Gastrocnemius medialis (tissue), 4 donors: ENCODE measurements at regions of chr17 and their contacts with region 1.

Region 1: GRCh38 chr17:8383143-8383822 is at the start of gene RPL26:
- DNase-seq: peak; percentile 96 to 98
- ATAC-seq: peak; percentile 93 to 96
- H3K4me3 ChIP-seq: peak within 1 kb of the TSS; percentile 67 to 88 (median 87)
- H3K27ac ChIP-seq: peak within 1 kb of the TSS; percentile 84 to 94 (median 92)
- H3K4me1 ChIP-seq: peaks cover 25% of the 10 kb centered on the region in 2 donors
- H3K27me3 ChIP-seq: no peaks in the 10 kb centered on the region
- CTCF ChIP-seq: peak; percentile 96 to 100 (median 100)
- POLR2A ChIP-seq: peak; percentile 84
- total RNA-seq, gene RPL26: 2,392 to 2,913 (median 2,833) TPM

Region 2: GRCh38 chr17:7932949-7933348 is 450.3 kb before region 1 on chr17:
- in situ Hi-C with region 1: no loop called
- intact Hi-C with region 1: no loop called
- DNase-seq: peak in 1 of 2 donors; percentile 31
- ATAC-seq: no peak
- H3K4me3 ChIP-seq: peak overlapping the region; percentile 85 to 97 (median 94)
- H3K27ac ChIP-seq: peak overlapping the region in 3 of 4 donors; percentile 83 to 87 (median 87)
- H3K4me1 ChIP-seq: peaks cover 17 to 19% of the 10 kb centered on the region in 2 donors
- H3K27me3 ChIP-seq: no peaks in the 10 kb centered on the region
- CTCF ChIP-seq: no peak
- POLR2A ChIP-seq: no peak

Region 3: GRCh38 chr17:8222630-8223356 is 160.5 kb before region 1 on chr17:
- in situ Hi-C with region 1: no loop called
- intact Hi-C with region 1: no loop called
- DNase-seq: peak; percentile 88 to 95
- ATAC-seq: peak; percentile 51 to 55
- H3K4me3 ChIP-seq: peak overlapping the region; percentile 64 to 91 (median 67)
- H3K27ac ChIP-seq: peak overlapping the region; percentile 89 to 99 (median 94)
- H3K4me1 ChIP-seq: peaks cover 11 to 13% of the 10 kb centered on the region in 2 donors
- H3K27me3 ChIP-seq: no peaks in the 10 kb centered on the region
- CTCF ChIP-seq: no peak
- POLR2A ChIP-seq: peak; percentile 63 to 65

Region 4: DNA sequence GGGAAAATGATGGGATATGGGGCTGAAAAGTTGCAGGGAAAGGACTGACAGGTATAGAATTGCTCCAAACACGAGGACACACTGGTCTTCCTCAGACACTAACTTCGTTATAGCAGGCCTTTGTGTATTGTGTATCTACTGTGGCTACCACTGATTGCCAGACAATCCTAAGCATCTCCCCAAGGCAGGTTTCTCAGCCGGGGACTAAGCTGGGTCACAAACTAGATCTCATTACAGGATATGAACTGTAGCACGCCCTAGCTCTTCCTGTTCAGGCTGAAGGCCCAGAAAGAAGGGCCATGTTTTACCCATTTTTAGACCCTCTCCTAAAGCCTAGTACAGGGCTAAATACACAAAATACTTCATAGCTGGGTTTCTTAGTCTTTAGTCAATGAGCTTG is 99.9 kb before region 1 on chr17:
- in situ Hi-C with region 1: no loop called
- intact Hi-C with region 1: no loop called
- DNase-seq: no peak
- ATAC-seq: no peak
- H3K4me3 ChIP-seq: no peak overlapping the region
- H3K27ac ChIP-seq: no peak overlapping the region
- H3K4me1 ChIP-seq: peaks cover 9 to 17% of the 10 kb centered on the region in 2 donors
- H3K27me3 ChIP-seq: no peaks in the 10 kb centered on the region
- CTCF ChIP-seq: no peak
- POLR2A ChIP-seq: no peak

Region 5: DNA sequence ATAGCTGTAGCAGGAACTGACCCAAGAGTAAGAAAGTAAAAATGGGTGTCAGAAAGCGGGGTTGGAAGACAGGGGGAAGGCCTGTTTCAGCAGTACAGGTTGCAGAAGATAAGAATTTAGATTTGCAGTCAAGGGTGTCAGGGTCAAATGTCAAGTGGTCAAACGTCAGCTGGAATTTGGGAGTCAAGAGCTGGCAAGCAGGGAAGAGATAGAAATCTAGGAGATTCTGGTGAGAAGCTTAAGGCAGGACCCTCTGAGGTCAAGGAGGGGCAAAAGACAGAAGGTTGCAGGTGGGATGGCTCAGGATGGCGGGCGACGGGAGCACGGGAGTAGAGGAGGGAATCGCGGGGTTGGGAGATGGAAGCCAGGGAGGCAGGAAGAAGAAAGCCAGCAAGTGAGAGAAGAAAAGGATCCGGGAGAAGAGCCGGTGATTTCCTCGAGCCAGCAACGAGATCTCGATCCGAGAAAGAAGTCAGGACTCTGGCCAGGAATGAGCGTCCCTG is 88.4 kb before region 1 on chr17:
- in situ Hi-C with region 1: no loop called
- intact Hi-C with region 1: loop called (anchors 1 kb)
- DNase-seq: no peak
- ATAC-seq: peak; percentile 29 to 35
- H3K4me3 ChIP-seq: peak overlapping the region; percentile 72 to 90 (median 83)
- H3K27ac ChIP-seq: peak overlapping the region; percentile 95 to 97 (median 96)
- H3K4me1 ChIP-seq: peaks cover 9 to 11% of the 10 kb centered on the region in 2 donors
- H3K27me3 ChIP-seq: no peaks in the 10 kb centered on the region
- CTCF ChIP-seq: no peak
- POLR2A ChIP-seq: no peak

Region 6: GRCh38 chr17:8435245-8436168 is 52.2 kb after region 1 on chr17 and contains the start of gene NDEL1:
- in situ Hi-C with region 1: no loop called
- intact Hi-C with region 1: loop called (anchors 1 kb)
- DNase-seq: peak; percentile 98
- ATAC-seq: peak; percentile 88 to 91
- H3K4me3 ChIP-seq: peak within 1 kb of the TSS; percentile 76 to 94 (median 84)
- H3K27ac ChIP-seq: peak within 1 kb of the TSS; percentile 92 to 99 (median 98)
- H3K4me1 ChIP-seq: peaks cover 21 to 22% of the 10 kb centered on the region in 2 donors
- H3K27me3 ChIP-seq: no peaks in the 10 kb centered on the region
- CTCF ChIP-seq: no peak
- POLR2A ChIP-seq: peak; percentile 99 to 100
- total RNA-seq, gene NDEL1: 31.3 to 60.6 (median 41.5) TPM

Region 7: DNA sequence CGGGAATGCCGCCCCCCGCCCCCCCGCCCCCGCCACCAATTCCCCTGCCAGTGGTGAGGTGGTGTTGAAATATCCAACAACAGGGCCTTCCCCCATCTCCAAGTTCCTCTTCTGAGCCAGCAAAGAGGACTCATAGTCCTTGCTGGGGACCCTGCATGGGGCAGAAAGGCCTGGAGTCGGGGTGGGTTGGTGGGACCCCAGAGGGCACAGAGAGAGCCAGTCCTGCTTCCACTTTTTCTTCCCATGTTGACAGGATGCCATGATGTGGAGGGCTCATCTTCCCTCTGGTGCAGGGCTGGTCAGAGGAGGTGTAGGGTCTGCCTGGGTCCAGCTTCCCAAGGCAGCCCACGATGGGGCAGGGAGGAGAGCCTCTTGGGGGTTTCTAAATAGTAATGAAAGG is 533.2 kb after region 1 on chr17:
- in situ Hi-C with region 1: no loop called
- intact Hi-C with region 1: no loop called
- DNase-seq: no peak
- ATAC-seq: no peak
- H3K4me3 ChIP-seq: no peak overlapping the region
- H3K27ac ChIP-seq: no peak overlapping the region
- H3K4me1 ChIP-seq: no peaks in the 10 kb centered on the region
- H3K27me3 ChIP-seq: no peaks in the 10 kb centered on the region
- CTCF ChIP-seq: no peak
- POLR2A ChIP-seq: no peak